ENCODE measurements at regions of chr14 and their contacts with region 1.

Region 1: DNA sequence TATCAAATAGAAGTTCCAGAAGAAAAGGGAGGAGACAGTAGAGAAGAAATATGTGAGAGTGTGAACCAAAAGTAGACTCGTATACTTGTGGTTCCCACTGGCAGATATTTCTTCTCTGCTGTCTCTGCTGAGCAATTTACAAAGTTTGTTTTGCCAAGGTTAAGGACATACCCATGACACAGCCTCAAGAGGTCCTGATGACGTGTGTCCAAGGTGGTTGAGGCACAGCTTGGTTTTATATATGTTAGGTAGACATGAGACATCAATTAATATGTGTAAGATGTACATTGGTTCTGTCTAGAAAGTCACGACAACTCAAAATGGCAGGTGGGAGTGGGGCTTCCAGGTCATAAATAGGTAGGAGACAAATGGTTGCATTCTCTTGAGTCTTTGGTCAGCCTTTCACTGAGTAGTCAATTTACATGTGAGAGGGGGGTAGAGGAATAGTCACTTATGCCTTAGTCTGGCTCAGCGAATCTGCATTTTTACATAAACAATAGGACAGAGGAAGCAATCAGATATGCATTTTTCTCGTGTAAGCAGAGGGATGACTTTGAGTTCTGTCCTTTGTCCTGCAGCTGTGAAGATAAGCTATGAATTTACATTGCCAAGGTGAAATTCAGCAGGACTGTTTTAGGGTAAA is 27.9 kb upstream of the UNC79 start:
- DNase-seq: no peak
- H3K4me3 Mint-ChIP-seq: no peak overlapping the region
- H3K27ac Mint-ChIP-seq: no peak overlapping the region
- H3K4me1 Mint-ChIP-seq: no peaks in the 10 kb centered on the region
- H3K27me3 Mint-ChIP-seq: peaks cover 5% of the 10 kb centered on the region

Region 2: GRCh38 chr14:93926873-93927799 is 524.3 kb after region 1 on chr14 and contains the start of gene FAM181A:
- CTCF ChIA-PET with region 1: no interaction called
- POLR2A ChIA-PET with region 1: interaction called, 10 read pairs
- DNase-seq: no peak
- H3K4me3 Mint-ChIP-seq: no peak within 1 kb of the TSS
- H3K27ac Mint-ChIP-seq: no peak within 1 kb of the TSS
- H3K4me1 Mint-ChIP-seq: no peaks in the 10 kb centered on the region
- H3K27me3 Mint-ChIP-seq: no peaks in the 10 kb centered on the region
- total RNA-seq, gene FAM181A: not detected

Measured in activated CD4-positive, alpha-beta T cell treated with anti-CD3 and anti-CD28 coated beads, Interleukin-2, amount 10 ng/mL, durations not matched to agents 7 days and 5 days (primary cell).